ENCODE measurements at regions of chr3 and their contacts with region 1.

Region 1: DNA sequence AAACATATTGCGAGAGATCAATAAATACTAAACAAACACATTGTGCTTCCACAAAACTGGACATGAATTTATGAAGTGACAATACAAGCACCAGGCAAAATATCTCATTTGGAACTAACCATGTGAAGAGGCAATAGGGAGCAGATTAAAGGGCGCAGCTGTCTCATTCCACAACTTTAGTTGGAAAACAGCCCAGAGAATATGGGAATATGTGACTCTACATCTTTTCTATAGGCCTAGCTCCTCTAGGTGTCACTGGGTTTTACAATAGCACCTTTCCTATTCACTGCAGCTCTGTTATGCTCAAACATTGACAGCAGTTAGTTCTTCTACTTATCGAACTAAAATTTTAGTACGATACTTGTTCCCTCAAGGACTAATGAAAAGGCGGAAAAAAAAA is 866.3 kb upstream of the GBE1 start:
- DNase-seq: no peak
- H3K4me3 Mint-ChIP-seq: no peak overlapping the region
- H3K27ac Mint-ChIP-seq: no peak overlapping the region
- H3K4me1 Mint-ChIP-seq: no peaks in the 10 kb centered on the region
- H3K27me3 Mint-ChIP-seq: no peaks in the 10 kb centered on the region

Region 2: DNA sequence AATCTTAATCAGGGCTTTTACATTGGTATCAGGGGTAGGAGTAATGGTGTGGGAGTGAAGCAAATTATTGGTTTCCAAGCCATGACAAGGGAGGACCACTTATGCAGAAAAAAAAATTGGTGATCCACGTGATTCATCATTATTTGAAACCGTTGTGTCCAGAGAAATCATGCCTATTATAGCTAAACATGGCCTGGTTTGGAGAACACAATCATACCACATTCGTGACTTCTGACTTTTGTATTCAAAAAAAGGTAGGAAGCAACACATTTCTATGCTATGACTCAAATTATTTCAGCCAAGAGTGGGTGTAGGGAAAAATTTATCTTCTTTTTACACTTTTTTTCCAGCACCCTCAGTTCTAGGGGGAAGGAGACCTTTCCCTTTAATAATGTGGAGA is 58.0 kb after region 1 on chr3:
- intact Hi-C with region 1: loop called (anchors 10 kb)
- DNase-seq: no peak
- H3K4me3 Mint-ChIP-seq: no peak overlapping the region
- H3K27ac Mint-ChIP-seq: no peak overlapping the region
- H3K4me1 Mint-ChIP-seq: no peaks in the 10 kb centered on the region
- H3K27me3 Mint-ChIP-seq: no peaks in the 10 kb centered on the region